ENCODE measurements at regions of chr11 and their contacts with region 1.

Region 1: GRCh38 chr11:67118801-67119584 is at the start of gene KDM2A:
- DNase-seq: peak; percentile 91 to 98
- H3K4me3 ChIP-seq: peak within 1 kb of the TSS; percentile 83
- H3K27ac ChIP-seq: peak within 1 kb of the TSS; percentile 82
- H3K4me1 ChIP-seq: peaks cover 13% of the 10 kb centered on the region
- H3K27me3 ChIP-seq: no peaks in the 10 kb centered on the region
- CTCF ChIP-seq: no peak
- total RNA-seq, gene KDM2A: 117 and 120 TPM in 2 replicates

Region 2: GRCh38 chr11:67382276-67383136 is 263.5 kb after region 1 on chr11:
- CTCF ChIA-PET with region 1: interaction called, 10 read pairs
- POLR2A ChIA-PET with region 1: no interaction called
- intact Hi-C with region 1: no loop called
- DNase-seq: peak; percentile 66 to 84
- H3K4me3 ChIP-seq: no peak overlapping the region
- H3K27ac ChIP-seq: no peak overlapping the region
- H3K4me1 ChIP-seq: peaks cover 64% of the 10 kb centered on the region
- H3K27me3 ChIP-seq: no peaks in the 10 kb centered on the region
- CTCF ChIP-seq: peak; percentile 99

Measured in PC-9 (cell line).